Panc1 (cell line): ENCODE measurements at regions of chr7 and their contacts with region 1.

Region 1: DNA sequence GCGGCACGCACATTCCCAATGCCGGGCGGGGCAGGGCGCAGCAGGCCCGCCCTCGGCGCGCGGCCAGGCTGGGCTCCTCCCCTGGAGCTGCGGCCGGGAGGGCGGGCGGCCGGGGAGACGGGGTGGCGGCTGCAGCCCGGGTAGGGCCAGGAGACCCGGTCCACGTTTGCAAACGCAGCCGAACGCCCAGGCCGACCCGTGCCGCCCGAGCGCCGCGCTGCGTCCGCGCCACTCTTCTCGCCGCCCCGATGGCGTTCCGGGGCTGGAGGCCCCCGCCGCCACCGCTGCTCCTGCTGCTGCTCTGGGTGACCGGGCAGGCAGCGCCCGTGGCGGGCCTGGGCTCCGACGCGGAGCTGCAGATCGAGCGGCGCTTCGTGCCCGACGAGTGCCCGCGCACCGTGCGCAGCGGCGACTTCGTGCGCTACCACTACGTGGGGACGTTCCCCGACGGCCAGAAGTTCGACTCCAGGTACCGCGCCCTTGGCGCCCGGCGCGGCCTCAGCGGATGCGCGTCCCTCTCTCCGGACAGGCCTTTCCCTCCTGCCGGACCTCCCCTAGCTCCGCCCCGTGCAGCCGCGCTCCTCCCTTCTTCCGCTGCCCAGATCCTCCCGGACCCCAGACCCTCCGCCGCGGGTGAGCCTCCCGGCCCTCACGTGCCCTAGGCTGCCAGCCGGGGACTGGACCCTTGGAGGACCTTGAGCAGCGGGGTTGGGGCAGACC is at the start of gene FKBP9:
- DNase-seq: peak; percentile 42
- ATAC-seq: peak; percentile 94
- H3K4me3 ChIP-seq: peak within 1 kb of the TSS; percentile 92 to 95
- H3K27ac ChIP-seq: peak within 1 kb of the TSS; percentile 98
- H3K4me1 ChIP-seq: peaks cover 10% of the 10 kb centered on the region
- H3K27me3 ChIP-seq: no peaks in the 10 kb centered on the region
- CTCF ChIP-seq: no peak
- total RNA-seq, gene FKBP9: 183 TPM

Region 2: GRCh38 chr7:32937344-32938174 is 19.9 kb before region 1 on chr7:
- CTCF ChIA-PET with region 1: no interaction called
- POLR2A ChIA-PET with region 1: interaction called, 14 read pairs
- in situ Hi-C with region 1: no loop called
- intact Hi-C with region 1: no loop called
- DNase-seq: no peak
- ATAC-seq: no peak
- H3K4me3 ChIP-seq: no peak overlapping the region
- H3K27ac ChIP-seq: no peak overlapping the region
- H3K4me1 ChIP-seq: peaks cover 9% of the 10 kb centered on the region
- H3K27me3 ChIP-seq: no peaks in the 10 kb centered on the region
- CTCF ChIP-seq: no peak

Region 3: DNA sequence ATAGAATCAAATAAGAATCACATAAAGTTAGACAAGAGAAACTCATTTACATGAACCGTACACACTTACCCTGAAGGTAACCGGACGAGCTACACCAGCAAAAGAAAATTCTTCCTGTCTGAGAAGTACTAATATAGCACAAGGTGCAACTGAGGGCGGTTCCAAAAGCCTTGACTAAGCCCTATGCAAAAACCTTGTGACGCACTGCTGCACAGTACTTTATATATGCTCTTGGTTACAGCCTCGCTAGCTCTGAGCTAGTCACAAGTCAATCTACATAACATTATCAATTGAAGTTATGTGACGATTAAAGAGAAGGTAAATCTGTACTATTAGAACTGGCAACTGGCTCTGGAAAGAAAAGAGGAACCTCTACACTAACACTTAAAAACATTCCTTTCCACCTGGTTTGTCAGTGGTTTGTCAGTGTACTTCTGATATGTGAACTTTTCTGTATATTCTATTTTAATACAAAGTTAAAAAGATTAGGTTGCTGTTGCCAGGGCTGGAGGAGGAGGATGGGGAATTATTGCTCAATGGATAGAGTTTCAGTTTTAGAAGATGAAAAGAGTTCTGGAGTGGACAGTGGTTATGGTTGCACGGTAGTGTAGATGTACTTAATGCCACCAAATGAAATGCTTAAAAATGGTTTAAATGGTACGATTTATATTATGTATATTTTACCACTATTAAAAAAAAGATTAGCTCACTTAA is 83.5 kb after region 1 on chr7:
- CTCF ChIA-PET with region 1: no interaction called
- POLR2A ChIA-PET with region 1: no interaction called
- in situ Hi-C with region 1: no loop called
- intact Hi-C with region 1: loop called (anchors 10 kb)
- DNase-seq: no peak
- ATAC-seq: peak; percentile 86
- H3K4me3 ChIP-seq: peak overlapping the region; percentile 1 to 12; a peak in 2 of 4 replicates
- H3K27ac ChIP-seq: peak overlapping the region; percentile 65
- H3K4me1 ChIP-seq: peaks cover 52% of the 10 kb centered on the region
- H3K27me3 ChIP-seq: no peaks in the 10 kb centered on the region
- CTCF ChIP-seq: no peak

Region 4: DNA sequence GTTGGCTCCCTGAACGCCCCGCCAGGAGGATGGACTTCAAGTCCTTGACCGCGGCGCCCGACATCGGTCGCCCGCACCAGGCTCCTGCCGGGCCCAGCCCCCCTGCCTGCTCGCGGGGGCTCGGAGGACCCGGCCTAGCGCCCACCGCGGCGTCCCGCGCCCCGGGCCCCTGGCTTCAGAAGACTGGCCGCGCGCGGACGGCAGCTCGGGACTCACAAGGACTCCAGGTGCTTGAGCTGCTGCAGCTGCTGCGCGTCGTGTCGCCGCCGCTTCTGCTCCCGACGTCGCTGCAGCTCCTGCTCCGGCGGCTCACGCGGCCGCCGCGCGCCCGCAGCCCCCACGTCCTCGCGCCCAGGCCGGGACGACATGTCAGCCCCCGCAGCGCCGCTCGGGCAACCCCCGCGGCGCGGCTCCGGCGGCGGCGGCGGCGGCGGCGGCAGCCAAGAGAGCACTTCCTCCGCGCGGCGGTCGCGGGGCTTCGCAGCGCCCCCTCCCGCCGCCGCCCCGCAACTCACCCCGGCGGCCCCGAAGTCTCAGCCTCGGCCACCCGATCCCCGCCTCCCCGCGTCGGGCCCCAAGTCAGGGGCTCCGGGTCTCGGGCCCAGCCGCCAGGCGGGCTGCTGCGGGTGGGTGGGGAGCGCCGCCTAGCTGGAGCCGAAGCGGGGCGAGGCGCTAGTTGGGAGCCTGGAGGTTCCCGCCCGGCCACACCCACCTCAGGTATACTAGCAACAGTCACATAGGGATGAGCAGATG is 151.7 kb after region 1 on chr7 and contains the start of gene RP9:
- CTCF ChIA-PET with region 1: no interaction called
- POLR2A ChIA-PET with region 1: no interaction called
- in situ Hi-C with region 1: no loop called
- intact Hi-C with region 1: loop called (anchors 5 kb)
- DNase-seq: no peak
- ATAC-seq: peak; percentile 94
- H3K4me3 ChIP-seq: peak within 1 kb of the TSS; percentile 80 to 89
- H3K27ac ChIP-seq: peak within 1 kb of the TSS; percentile 78
- H3K4me1 ChIP-seq: peaks cover 19% of the 10 kb centered on the region
- H3K27me3 ChIP-seq: no peaks in the 10 kb centered on the region
- CTCF ChIP-seq: peak; percentile 99
- total RNA-seq, gene RP9: 22.1 TPM